ENCODE measurements at regions of chr7 and their contacts with region 1.

Region 1: DNA sequence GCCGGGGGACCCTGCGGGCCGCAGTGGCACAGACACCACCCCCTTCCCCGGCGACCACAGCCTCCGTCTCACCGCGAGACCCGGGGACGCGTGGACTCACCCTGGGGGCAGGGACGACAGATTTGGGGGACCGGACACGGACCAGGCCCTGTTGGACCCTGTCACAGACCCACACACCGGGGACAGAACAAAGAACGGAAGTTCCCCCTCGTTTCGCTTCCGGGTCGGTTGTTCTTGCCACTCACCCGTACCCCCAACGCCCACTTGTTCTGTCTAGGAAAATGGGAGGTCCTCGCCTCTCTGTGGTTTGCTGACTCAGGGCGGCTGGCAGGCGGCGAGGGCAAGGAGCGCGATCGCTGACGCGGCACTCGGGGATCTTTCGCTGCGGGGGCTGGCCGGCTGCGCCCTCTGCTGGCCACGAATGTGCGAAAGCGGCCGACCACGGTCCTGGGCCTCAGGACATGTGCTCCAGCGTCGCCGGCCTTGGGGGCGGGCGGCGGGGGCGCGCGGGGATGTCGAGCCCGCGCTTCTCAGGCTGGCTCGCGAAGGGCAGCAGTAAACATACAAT is at the start of gene ZNF3:
- DNase-seq: peak; percentile 99
- H3K4me3 Mint-ChIP-seq: peak within 1 kb of the TSS; percentile 88
- H3K27ac Mint-ChIP-seq: peak within 1 kb of the TSS; percentile 86
- H3K4me1 Mint-ChIP-seq: peaks cover 29% of the 10 kb centered on the region
- H3K27me3 Mint-ChIP-seq: no peaks in the 10 kb centered on the region
- total RNA-seq, gene ZNF3: 13.1 to 14.0 TPM

Region 2: DNA sequence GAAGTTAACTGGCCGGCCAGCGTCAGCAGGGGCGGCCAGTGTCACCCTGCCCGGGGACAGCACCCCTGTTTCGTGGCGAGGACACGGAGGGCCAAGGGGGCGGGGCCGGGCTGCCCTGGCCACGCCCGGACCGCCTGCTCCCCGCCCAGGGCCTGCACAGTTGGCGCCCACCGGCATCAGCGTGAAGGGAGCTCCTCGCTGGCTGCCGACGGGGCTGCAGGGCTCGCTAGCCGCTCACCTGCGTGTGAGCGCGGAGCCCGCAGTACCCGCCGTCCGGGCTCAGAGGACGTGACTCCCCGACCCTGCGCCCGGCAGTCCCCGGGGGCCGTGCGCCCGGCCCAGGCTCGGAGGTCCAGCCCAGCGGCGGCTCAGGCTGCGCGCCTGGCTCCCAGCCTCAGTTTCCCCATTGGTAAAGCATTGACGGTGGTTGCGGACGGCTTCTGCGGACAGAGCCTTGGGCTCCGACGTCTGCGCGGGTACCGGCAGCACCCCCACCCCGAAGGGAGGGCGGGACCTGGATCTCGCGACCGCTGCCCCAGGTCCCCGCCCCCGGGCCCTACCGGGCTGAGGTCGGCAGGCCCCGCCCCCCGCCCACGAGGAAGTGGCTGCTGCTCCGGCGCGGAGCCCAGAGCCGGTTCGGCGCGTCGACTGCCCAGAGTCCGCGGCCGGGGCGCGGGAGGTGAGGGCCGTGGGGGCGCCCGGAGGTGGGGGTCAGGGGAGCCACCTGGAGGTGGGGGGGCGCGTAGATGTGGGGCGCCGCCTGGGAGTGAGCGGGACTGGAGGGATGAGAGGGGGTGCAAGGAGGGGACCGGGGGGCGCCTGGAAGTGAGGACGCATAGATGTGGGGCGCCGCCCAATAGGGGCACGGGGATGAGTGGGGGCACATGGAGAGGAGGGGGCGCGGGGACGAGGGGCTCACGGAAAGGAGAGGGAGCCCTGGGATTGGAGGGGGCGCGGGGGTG is 707.2 kb before region 1 on chr7 and contains the start of gene ARPC1B:
- CTCF ChIA-PET with region 1: no interaction called
- intact Hi-C with region 1: loop called (anchors 1 kb)
- DNase-seq: peak; percentile 88
- H3K4me3 Mint-ChIP-seq: peak within 1 kb of the TSS; percentile 79
- H3K27ac Mint-ChIP-seq: peak within 1 kb of the TSS; percentile 87
- H3K4me1 Mint-ChIP-seq: peaks cover 24% of the 10 kb centered on the region
- H3K27me3 Mint-ChIP-seq: no peaks in the 10 kb centered on the region
- total RNA-seq, gene ARPC1B: 334 to 345 TPM

Region 3: DNA sequence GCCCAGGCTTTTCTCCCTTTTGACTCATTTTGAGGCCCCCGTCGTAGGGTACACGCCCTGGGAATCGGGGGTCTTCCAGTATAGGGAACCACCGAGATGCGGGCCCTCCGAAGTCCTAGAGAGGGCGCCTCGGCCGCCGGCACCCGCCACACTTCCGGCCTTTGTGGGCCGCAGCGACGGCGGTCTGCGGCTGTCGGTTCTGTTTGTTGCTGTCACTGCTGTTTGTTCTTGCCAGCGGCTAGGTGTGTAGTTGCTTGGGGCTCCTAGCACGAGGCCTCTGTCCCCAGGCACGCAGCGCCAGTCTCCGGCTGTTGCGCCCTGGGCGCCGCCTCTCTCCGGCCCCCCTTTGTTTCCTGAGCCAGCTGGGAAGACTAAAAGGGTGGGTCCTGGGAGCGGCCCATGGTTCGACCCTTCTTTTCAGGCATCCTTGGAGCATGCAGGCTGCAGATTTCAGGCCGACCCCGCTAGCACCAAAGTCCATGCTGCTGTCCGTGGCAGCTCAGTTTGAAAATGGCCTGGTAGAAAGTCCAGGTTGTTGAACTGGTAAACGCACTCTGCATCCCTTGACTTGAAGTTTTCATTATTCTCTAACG is 84.0 kb before region 1 on chr7:
- CTCF ChIA-PET with region 1: interaction called, 6 read pairs
- intact Hi-C with region 1: loop called (anchors 1 kb)
- DNase-seq: peak; percentile 78
- H3K4me3 Mint-ChIP-seq: peak overlapping the region; percentile 69
- H3K27ac Mint-ChIP-seq: peak overlapping the region; percentile 78
- H3K4me1 Mint-ChIP-seq: peaks cover 10% of the 10 kb centered on the region
- H3K27me3 Mint-ChIP-seq: no peaks in the 10 kb centered on the region

Region 4: DNA sequence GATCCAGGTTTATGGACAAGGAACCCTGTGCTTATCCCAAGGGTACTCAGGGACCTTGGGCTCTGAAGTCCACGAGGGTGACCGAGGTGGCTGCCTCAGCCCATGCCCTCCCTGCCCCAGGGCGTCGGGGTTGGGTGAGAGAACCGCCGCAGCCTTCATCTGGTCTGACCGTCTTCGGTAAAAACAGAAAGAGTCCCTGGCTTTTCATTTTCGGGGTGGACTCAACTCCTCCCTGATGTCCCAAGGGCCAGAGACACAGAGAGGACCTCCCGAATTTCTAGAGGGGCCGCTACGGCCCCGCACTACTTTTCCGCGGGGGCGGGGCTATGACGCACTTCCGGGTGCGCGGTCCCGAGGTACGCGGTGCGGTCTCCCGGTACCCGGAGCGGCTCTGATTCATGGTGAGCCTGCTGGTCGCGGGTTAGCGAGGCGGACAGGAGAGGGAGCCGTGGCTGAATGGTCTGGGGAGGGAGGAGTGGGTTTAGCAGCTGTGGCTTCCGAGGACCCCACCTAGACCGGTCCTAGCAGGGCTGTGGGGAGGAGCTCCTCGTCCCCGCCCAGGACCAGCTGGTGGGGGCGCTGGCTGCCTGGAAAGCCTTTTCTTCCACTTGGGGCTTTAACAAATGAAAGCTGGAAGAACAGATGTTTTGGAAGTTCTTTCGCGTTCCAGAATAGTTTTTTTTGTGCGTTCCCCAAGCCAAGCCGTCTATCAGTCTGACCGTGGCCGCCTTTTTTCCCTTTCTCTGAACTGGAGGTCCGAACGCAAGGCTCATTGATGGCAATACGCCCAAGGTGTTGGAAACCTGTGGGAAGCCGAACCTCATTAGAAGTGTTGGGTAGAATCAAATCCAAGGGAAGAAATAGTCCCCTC is 31.9 kb before region 1 on chr7 and contains the start of gene ZSCAN21:
- CTCF ChIA-PET with region 1: no interaction called
- intact Hi-C with region 1: loop called (anchors 1 kb)
- DNase-seq: peak; percentile 85
- H3K4me3 Mint-ChIP-seq: peak within 1 kb of the TSS; percentile 85
- H3K27ac Mint-ChIP-seq: peak within 1 kb of the TSS; percentile 91
- H3K4me1 Mint-ChIP-seq: peaks cover 17% of the 10 kb centered on the region
- H3K27me3 Mint-ChIP-seq: no peaks in the 10 kb centered on the region
- total RNA-seq, gene ZSCAN21: 6.2 to 6.4 TPM

Region 5: DNA sequence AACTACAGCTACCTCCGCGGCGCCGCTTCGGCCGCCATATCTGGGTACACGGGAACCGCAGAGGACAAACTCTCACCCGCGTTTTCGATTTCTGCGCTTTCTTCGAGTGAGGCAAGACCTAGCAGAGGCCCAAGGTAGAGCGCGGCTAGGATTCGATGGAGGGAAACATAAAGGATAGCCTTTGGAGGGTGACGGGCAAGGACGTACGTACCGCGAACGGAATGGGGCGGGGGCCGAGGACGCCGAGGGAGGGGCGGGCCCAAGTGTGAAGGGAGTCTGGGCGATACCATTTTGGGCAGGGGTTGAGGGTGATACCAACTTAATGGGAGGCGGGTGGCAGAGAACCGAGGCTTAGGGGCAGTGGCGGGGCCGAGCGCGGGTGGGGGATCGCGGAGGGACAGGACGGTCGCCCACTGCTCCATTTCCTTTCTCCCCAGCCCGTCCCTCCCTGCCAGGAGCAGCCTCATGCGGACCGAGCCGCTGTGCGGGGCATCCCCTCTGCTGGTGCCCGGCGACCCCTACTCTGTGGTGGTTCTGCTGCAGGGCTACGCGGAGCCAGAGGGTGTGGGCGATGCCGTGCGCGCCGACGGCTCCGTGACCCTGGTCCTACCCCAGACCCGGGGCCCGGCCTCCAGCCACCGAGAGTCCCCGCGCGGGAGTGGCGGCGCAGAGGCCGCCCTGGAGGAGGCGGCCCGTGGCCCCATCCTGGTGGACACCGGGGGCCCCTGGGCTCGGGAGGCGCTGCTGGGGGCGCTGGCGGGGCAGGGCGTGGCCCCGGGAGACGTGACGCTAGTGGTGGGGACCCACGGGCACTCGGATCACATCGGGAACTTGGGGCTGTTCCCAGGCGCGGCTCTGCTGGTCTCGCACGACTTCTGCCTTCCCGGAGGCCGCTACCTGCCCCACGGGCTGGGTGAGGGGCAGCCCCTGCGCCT is 45.6 kb after region 1 on chr7 and contains the start of gene MBLAC1:
- CTCF ChIA-PET with region 1: interaction called, 3 read pairs
- intact Hi-C with region 1: loop called (anchors 1 kb)
- DNase-seq: peak; percentile 94
- H3K4me3 Mint-ChIP-seq: peak within 1 kb of the TSS; percentile 100
- H3K27ac Mint-ChIP-seq: peak within 1 kb of the TSS; percentile 99
- H3K4me1 Mint-ChIP-seq: peaks cover 30% of the 10 kb centered on the region
- H3K27me3 Mint-ChIP-seq: no peaks in the 10 kb centered on the region
- total RNA-seq, gene MBLAC1: 2.3 to 2.9 TPM

Measured in activated naive CD4-positive, alpha-beta T cell treated with anti-CD3 and anti-CD28 coated beads for 36 hours (primary cell).